ENCODE measurements at regions of chr5 and their contacts with region 1.

Region 1: GRCh38 chr5:134041570-134042411 is 37.0 kb upstream of the VDAC1 start:
- DNase-seq: no peak
- H3K4me3 ChIP-seq: no peak overlapping the region
- H3K27ac ChIP-seq: no peak overlapping the region
- H3K4me1 ChIP-seq: peaks cover 0 to 3% of the 10 kb centered on the region in 2 experiments; a peak in 1 of 4 replicates
- H3K27me3 ChIP-seq: no peaks in the 10 kb centered on the region
- CTCF ChIP-seq: no peak
- EP300 ChIP-seq: no peak
- RAD21 ChIP-seq: no peak

Region 2: GRCh38 chr5:133754575-133755169 is 287.1 kb before region 1 on chr5:
- CTCF ChIA-PET with region 1: no interaction called
- POLR2A ChIA-PET with region 1: no interaction called
- DNase-seq: no peak
- H3K4me3 ChIP-seq: no peak overlapping the region
- H3K27ac ChIP-seq: no peak overlapping the region
- H3K4me1 ChIP-seq: peaks cover 0 to 10% of the 10 kb centered on the region in 2 experiments; a peak in 1 of 4 replicates
- H3K27me3 ChIP-seq: peaks cover 5% of the 10 kb centered on the region; the same call in 1 of the 2 replicates
- CTCF ChIP-seq: peak; percentile 56
- EP300 ChIP-seq: no peak
- RAD21 ChIP-seq: peak; percentile 49

Region 3: GRCh38 chr5:134053840-134054338 is 12.1 kb after region 1 on chr5:
- CTCF ChIA-PET with region 1: interaction called, 65 read pairs
- POLR2A ChIA-PET with region 1: interaction called, 3 read pairs
- DNase-seq: no peak
- H3K4me3 ChIP-seq: no peak overlapping the region
- H3K27ac ChIP-seq: peak overlapping the region in 1 of 2 experiments; percentile 50; a peak in 2 of 4 replicates
- H3K4me1 ChIP-seq: peaks cover 4 to 23% of the 10 kb centered on the region in 2 experiments; a peak in 3 of 4 replicates
- H3K27me3 ChIP-seq: no peaks in the 10 kb centered on the region
- CTCF ChIP-seq: no peak
- EP300 ChIP-seq: no peak
- RAD21 ChIP-seq: no peak

Region 4: GRCh38 chr5:134086943-134087305 is 45.1 kb after region 1 on chr5:
- CTCF ChIA-PET with region 1: interaction called, 16 read pairs
- POLR2A ChIA-PET with region 1: no interaction called
- DNase-seq: no peak
- H3K4me3 ChIP-seq: no peak overlapping the region
- H3K27ac ChIP-seq: no peak overlapping the region
- H3K4me1 ChIP-seq: peaks cover 0 to 32% of the 10 kb centered on the region in 2 experiments; a peak in 1 of 4 replicates
- H3K27me3 ChIP-seq: no peaks in the 10 kb centered on the region
- CTCF ChIP-seq: no peak
- EP300 ChIP-seq: no peak
- RAD21 ChIP-seq: no peak

Region 5: GRCh38 chr5:134125039-134126015 is 83.5 kb after region 1 on chr5:
- CTCF ChIA-PET with region 1: interaction called, 124 read pairs
- POLR2A ChIA-PET with region 1: interaction called, 3 read pairs
- DNase-seq: peak; percentile 82
- H3K4me3 ChIP-seq: no peak overlapping the region
- H3K27ac ChIP-seq: peak overlapping the region; percentile 88 to 97
- H3K4me1 ChIP-seq: peaks cover 31 to 85% of the 10 kb centered on the region in 2 experiments
- H3K27me3 ChIP-seq: no peaks in the 10 kb centered on the region
- CTCF ChIP-seq: no peak
- EP300 ChIP-seq: peak in 1 of 2 experiments; percentile 75; a peak in 2 of 4 replicates
- RAD21 ChIP-seq: no peak

Region 6: GRCh38 chr5:134161513-134162395 is 120.0 kb after region 1 on chr5:
- CTCF ChIA-PET with region 1: interaction called, 27 read pairs
- POLR2A ChIA-PET with region 1: no interaction called
- DNase-seq: no peak
- H3K4me3 ChIP-seq: no peak overlapping the region
- H3K27ac ChIP-seq: no peak overlapping the region
- H3K4me1 ChIP-seq: no peaks in the 10 kb centered on the region
- H3K27me3 ChIP-seq: no peaks in the 10 kb centered on the region
- CTCF ChIP-seq: no peak
- EP300 ChIP-seq: no peak
- RAD21 ChIP-seq: no peak

Region 7: DNA sequence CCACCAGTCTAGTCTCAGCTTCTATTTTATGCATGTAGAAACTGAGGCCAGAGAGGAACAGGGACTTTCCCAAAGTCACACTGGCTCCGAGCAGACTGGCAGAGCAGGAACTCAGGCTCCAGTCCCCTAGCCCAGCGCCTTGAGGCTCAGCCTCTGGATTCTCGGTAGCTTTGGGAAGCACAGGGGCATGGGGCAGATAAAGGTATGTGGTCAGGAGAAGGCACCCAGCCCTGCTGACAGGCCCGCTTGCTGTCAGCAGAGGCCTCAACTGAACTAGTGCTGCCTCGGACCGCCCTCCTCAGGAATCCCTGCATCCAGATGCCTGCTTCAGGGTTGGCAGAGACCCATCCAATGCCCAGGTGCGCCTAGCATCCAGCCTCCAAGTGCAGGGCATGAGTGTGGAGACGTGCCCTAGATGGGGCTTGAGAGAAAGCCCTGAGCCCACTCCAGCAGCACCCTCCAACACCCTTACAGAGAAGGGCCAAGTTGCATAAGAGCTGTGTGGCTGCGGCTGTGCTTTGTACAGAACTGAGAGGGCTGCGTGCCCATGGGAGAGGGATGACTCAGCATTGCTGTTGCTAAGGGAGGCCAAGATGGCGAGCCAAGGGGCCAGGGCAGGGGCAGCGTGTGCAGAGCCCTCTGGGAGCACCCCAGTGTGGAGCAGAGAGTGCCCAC is 1188.6 kb after region 1 on chr5:
- CTCF ChIA-PET with region 1: no interaction called
- POLR2A ChIA-PET with region 1: no interaction called
- DNase-seq: no peak
- H3K4me3 ChIP-seq: no peak overlapping the region
- H3K27ac ChIP-seq: no peak overlapping the region
- H3K4me1 ChIP-seq: peaks cover 0 to 26% of the 10 kb centered on the region in 2 experiments; a peak in 2 of 4 replicates
- H3K27me3 ChIP-seq: no peaks in the 10 kb centered on the region
- CTCF ChIP-seq: no peak
- EP300 ChIP-seq: no peak
- RAD21 ChIP-seq: no peak

Region 8: GRCh38 chr5:135660826-135661575 is 1619.2 kb after region 1 on chr5:
- CTCF ChIA-PET with region 1: no interaction called
- POLR2A ChIA-PET with region 1: no interaction called
- DNase-seq: no peak
- H3K4me3 ChIP-seq: no peak overlapping the region
- H3K27ac ChIP-seq: no peak overlapping the region
- H3K4me1 ChIP-seq: no peaks in the 10 kb centered on the region
- H3K27me3 ChIP-seq: no peaks in the 10 kb centered on the region
- CTCF ChIP-seq: no peak
- EP300 ChIP-seq: no peak
- RAD21 ChIP-seq: no peak